ENCODE measurements at regions of chr9 and their contacts with region 1.

Region 1: GRCh38 chr9:14347406-14348122 is 33.6 kb upstream of the NFIB start:
- DNase-seq: peak in 3 of 5 donors; percentile 18 to 52 (median 40)
- H3K4me3 ChIP-seq: peak overlapping the region; percentile 47
- H3K27ac ChIP-seq: peak overlapping the region; percentile 11 to 50
- H3K4me1 ChIP-seq: peaks cover 2% of the 10 kb centered on the region
- H3K27me3 ChIP-seq: no peaks in the 10 kb centered on the region
- CTCF ChIP-seq: no peak
- EP300 ChIP-seq: no peak
- POLR2A ChIP-seq: no peak

Region 2: GRCh38 chr9:13446938-13447842 is 900.4 kb before region 1 on chr9:
- intact Hi-C with region 1: loop called in 3 of 4 experiments (anchors 5 to 10 kb)
- DNase-seq: no peak
- H3K4me3 ChIP-seq: no peak overlapping the region
- H3K27ac ChIP-seq: no peak overlapping the region
- H3K4me1 ChIP-seq: no peaks in the 10 kb centered on the region
- H3K27me3 ChIP-seq: no peaks in the 10 kb centered on the region
- CTCF ChIP-seq: peak in 2 of 3 donors; percentile 15 to 36
- EP300 ChIP-seq: no peak
- POLR2A ChIP-seq: no peak

Region 3: DNA sequence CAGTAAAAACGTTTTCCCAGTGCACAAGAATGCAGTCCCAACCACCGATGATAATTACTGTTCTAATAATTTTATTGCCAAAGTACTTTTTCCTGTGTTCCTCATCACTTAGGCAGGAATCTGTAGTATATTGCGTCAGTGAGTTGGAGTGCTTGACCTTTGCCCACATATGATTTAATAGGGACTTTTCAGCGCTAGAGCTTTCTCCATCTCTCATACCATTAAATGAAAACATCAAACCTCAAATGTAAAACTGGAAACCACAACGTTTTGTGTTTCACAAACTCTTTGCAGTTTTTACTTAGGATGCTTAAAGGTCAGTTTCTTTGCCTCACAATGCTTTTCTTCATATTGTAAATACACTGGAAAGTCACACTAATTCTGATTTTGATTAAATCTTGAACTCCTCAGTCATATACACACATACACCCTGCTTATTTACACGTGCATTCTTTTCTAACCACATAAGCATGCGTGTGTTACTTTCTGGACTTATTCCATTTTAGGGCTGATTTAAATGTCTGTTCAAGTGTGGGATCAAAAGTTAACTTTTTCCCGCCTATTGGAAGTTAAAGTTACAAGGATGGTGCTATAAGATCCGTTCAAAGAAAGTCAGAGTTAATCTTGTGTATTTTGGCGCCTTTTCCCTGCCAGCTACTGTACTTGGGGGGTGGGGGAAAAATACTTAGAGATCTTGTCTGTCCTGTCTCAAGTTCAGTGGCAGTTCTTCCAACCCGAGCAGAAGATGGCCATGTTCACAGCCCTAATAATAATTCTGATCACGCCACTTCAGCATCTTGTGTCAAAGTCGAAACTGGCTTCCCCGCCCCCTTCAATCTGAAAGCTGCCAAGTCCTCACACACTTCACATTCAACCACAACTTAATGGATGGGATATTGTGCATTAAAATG is 27.0 kb before region 1 on chr9:
- intact Hi-C with region 1: loop called in 1 of 4 experiments (anchors 2 kb)
- DNase-seq: peak in 1 of 5 donors; percentile 51
- H3K4me3 ChIP-seq: peak overlapping the region; percentile 68
- H3K27ac ChIP-seq: peak overlapping the region in 1 of 2 donors; percentile 38
- H3K4me1 ChIP-seq: peaks cover 2% of the 10 kb centered on the region
- H3K27me3 ChIP-seq: no peaks in the 10 kb centered on the region
- CTCF ChIP-seq: no peak
- EP300 ChIP-seq: no peak
- POLR2A ChIP-seq: no peak